Heart right ventricle (tissue), 16 donors: ENCODE measurements at regions of chr5 and their contacts with region 1.

Region 1: GRCh38 chr5:140372971-140373487 is 13.0 kb downstream of the SLC4A9 start:
- DNase-seq: peak; percentile 62 to 84
- ATAC-seq: peak; percentile 69 to 92 (median 86)
- H3K4me3 ChIP-seq: no peak overlapping the region
- H3K27ac ChIP-seq: peak overlapping the region in 2 of 10 donors; percentile 0 to 1
- H3K4me1 ChIP-seq: peaks cover 3 to 11% (median 7%) of the 10 kb centered on the region in 9 donors
- H3K27me3 ChIP-seq: no peaks in the 10 kb centered on the region
- CTCF ChIP-seq: peak; percentile 60 to 92 (median 86)

Region 2: GRCh38 chr5:140639148-140639979 is 266.3 kb after region 1 on chr5 and contains the start of gene TMCO6:
- intact Hi-C with region 1: loop called in 5 of 10 experiments (anchors 10 kb)
- DNase-seq: peak; percentile 98 to 99
- ATAC-seq: peak; percentile 98 to 99 (median 99)
- H3K4me3 ChIP-seq: peak within 1 kb of the TSS; percentile 53 to 90 (median 70)
- H3K27ac ChIP-seq: peak within 1 kb of the TSS; percentile 64 to 97 (median 88)
- H3K4me1 ChIP-seq: peaks cover 0 to 44% (median 16%) of the 10 kb centered on the region in 9 donors
- H3K27me3 ChIP-seq: no peaks in the 10 kb centered on the region
- CTCF ChIP-seq: peak; percentile 41 to 89 (median 75)
- total RNA-seq, gene TMCO6: 1.6 to 5.2 (median 3.2) TPM

Region 3: DNA sequence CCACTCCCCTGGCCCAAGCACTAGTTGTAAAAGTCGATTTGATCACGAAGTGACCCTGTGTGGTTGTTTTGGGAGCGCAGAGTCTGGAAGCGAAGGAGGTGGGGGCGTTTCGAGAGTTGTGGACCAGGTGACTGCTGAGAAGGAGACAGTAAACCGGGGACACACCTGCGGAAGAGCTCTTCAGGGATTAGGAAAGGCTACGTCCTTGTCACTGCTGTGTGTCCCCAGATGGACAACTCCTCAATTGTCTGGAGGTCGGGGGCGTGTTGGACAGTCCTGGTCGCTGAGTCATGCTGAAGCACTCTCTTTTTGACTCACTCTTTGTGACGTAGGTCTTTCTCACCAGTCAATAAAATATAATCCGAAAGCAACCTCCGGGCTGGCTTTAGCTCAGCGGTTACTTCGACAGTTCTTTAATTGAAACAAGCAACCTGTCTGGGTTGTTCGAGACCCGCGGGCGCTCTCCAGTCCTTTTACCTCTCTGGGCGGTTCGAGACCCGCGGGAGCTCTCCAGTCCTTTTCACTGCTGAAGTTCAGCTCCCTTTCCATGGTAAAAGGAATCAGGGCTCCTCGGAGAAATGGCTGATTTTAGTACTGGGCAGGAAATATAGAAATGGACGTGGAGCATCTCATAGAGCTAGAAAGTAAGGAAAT is 338.0 kb after region 1 on chr5:
- intact Hi-C with region 1: loop called in 3 of 10 experiments (anchors 5 to 10 kb)
- DNase-seq: peak; percentile 82 to 88
- ATAC-seq: peak; percentile 91 to 98 (median 97)
- H3K4me3 ChIP-seq: peak overlapping the region; percentile 31 to 77 (median 66)
- H3K27ac ChIP-seq: peak overlapping the region in 9 of 10 donors; percentile 72 to 95 (median 83)
- H3K4me1 ChIP-seq: peaks cover 0 to 20% (median 4%) of the 10 kb centered on the region in 9 donors
- H3K27me3 ChIP-seq: no peaks in the 10 kb centered on the region
- CTCF ChIP-seq: no peak

Region 4: DNA sequence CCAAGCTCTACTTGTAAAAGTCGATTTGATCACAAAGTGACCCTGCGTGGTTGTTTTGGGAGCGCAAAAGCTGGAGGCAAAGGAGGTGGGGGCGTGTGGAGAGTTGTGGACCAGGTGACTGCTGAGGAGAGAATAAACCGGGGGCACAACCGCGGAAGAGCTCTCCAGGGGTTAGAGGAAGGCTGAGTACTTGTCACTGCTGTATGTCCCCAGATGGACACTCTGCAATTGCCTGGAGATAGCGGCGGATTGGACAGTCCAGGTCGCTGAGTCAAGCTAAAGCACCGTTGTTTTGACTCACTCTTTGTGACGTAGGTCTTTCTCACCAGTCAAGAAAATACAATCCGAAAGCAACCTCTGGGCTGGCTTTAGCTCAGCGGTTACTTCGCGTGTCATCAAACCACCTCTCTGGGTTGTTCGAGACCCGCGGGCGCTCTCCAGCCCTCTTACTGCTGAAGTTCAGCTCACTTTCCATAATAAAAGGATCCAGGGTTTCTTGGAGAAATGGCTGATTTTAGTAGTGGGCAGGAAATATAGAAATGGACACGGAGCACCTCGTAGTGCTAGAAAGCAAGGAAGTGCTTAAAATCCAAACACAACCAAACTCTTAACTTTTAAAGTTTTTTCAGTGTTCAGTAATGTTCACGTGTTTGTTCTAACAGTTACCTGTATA is 352.9 kb after region 1 on chr5:
- intact Hi-C with region 1: loop called in 5 of 10 experiments (anchors 2 to 10 kb)
- DNase-seq: peak; percentile 25 to 37
- ATAC-seq: peak; percentile 51 to 85 (median 74)
- H3K4me3 ChIP-seq: peak overlapping the region in 3 of 10 donors; percentile 24 to 31 (median 31)
- H3K27ac ChIP-seq: no peak overlapping the region
- H3K4me1 ChIP-seq: no peaks in the 10 kb centered on the region
- H3K27me3 ChIP-seq: peaks cover 0 to 50% (median 15%) of the 10 kb centered on the region in 7 donors
- CTCF ChIP-seq: no peak

Region 5: DNA sequence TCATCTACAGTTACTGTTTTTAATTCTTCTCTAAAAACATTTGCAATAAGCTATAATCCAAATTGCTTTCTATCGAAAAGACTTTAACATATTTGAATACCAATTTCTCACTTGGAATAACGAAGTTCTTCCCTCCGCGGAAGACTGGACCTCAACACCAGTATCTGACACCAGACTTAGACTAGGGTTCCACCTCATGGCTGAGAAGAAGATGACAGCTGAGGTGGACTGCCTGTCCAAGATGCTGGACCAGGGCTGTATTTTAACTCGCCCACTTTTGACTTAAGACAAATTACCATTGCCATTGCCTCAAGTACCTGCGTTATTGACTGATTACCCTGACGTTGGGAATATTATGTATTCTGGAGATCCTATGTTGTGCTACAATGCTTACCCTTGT is 361.3 kb after region 1 on chr5:
- intact Hi-C with region 1: loop called in 4 of 10 experiments (anchors 5 to 10 kb)
- DNase-seq: no peak
- ATAC-seq: peak in 1 of 8 donors; percentile 80
- H3K4me3 ChIP-seq: no peak overlapping the region
- H3K27ac ChIP-seq: no peak overlapping the region
- H3K4me1 ChIP-seq: no peaks in the 10 kb centered on the region
- H3K27me3 ChIP-seq: peaks cover 0 to 77% (median 36%) of the 10 kb centered on the region in 7 donors
- CTCF ChIP-seq: peak in 7 of 9 donors; percentile 26 to 70 (median 46)

Region 6: GRCh38 chr5:141040771-141041426 is 667.9 kb after region 1 on chr5:
- intact Hi-C with region 1: loop called in 3 of 10 experiments (anchors 5 to 10 kb)
- DNase-seq: peak; percentile 85 to 92
- ATAC-seq: peak; percentile 95 to 98 (median 97)
- H3K4me3 ChIP-seq: peak overlapping the region in 9 of 10 donors; percentile 23 to 56 (median 36)
- H3K27ac ChIP-seq: peak overlapping the region in 2 of 10 donors; percentile 30 to 40
- H3K4me1 ChIP-seq: peaks cover 0 to 13% (median 8%) of the 10 kb centered on the region in 9 donors
- H3K27me3 ChIP-seq: peaks cover 0 to 34% (median 12%) of the 10 kb centered on the region in 7 donors
- CTCF ChIP-seq: peak; percentile 37 to 82 (median 69)